ENCODE measurements at regions of chr3 and their contacts with region 1.

Region 1: DNA sequence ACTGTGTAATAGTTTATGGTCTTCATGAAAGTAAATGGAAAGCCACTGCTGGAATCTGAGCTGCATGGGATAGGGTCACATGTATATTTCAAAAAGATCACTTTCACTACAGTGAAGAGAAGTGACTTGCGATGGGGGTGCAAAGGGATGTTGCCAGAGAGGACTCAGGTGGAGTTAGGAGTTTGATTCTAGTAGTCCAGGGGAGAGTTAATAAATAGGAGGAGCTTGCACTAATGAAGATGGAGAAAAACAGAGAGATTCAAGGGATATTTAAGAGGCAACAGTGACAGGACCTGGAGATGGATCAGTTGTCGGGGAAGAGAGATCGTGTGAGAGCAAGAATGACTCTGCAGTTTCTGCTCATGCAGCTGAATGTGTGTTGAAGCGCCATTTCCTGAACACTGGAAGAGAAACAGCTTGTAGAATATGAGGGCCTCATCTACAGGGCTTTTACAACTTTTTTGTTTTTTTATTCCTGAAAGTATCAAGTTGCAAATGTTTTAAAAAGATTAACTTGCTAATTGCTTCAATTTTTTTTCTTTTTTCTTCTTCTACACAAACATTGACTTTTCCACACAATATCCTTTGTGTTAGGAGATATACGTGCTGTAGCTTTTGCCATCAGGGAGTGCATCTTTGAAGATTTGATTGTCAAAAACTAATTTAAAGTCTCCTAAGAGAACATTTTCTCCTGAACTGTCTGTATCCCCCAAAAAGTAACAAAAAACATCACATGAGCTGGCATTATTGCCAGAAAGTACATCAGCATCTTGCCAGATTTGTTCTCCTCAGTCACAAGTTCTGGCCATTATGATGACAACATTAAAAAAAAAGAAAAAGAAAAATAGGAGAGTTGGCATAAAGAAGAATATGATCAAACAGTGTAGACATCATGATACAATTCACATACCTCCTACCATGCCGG is 37.5 kb downstream of the SETMAR start:
- DNase-seq: no peak
- CTCF ChIP-seq: no peak

Region 2: DNA sequence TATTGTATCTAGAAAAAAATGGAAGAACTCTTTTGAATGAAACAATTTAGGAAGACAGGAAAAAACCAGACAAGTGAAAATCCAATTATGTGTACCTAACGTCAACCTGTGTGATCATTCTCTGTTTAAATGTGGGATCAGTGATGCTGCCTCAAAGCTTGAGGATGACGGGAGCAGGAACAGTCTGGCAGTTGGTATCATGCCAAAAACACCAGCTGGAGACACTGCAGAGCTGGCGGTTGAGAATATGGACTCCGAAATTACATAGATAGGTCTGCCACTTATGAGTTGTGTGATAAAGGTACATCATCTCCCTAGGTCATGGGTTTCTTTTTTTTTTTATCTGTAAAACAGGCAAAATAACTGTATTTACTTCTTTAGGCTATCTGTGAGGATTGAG is 1761.5 kb before region 1 on chr3:
- in situ Hi-C with region 1: no loop called
- DNase-seq: no peak
- CTCF ChIP-seq: no peak

Region 3: DNA sequence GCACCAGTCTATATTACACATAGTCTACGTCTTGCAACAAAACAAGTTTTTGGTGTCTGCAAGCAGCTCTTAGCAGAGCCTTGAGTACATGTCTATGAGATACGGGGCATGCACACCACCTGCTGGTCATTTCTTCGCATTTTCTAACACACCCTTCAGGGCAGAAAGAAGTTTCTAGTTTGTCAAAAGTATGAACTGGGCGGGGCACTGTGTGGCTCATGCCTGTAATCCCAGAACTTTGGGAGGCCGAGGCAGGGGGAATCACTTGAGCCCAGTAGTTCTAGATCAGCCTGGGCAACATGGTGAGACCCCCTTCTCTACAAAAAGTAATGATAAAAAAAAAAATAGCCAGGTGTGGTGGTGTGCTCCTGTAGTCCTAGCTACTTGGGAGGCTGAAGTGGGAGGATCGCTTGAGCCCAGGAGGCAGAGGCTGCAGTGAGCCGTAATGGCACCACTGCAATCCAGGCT is 717.2 kb after region 1 on chr3:
- in situ Hi-C with region 1: loop called (anchors 25 kb)
- DNase-seq: peak; percentile 65
- CTCF ChIP-seq: peak; percentile 76